ENCODE measurements at regions of chr1 and their contacts with region 1.

Region 1: GRCh38 chr1:91944087-91944486 is 5.1 kb upstream of the BRDT start:
- DNase-seq: no peak
- ATAC-seq: no peak
- H3K4me3 ChIP-seq: no peak overlapping the region
- H3K27ac ChIP-seq: no peak overlapping the region
- H3K4me1 ChIP-seq: no peaks in the 10 kb centered on the region
- H3K27me3 ChIP-seq: no peaks in the 10 kb centered on the region
- CTCF ChIP-seq: no peak

Region 2: GRCh38 chr1:91795591-91796389 is 148.3 kb before region 1 on chr1:
- CTCF ChIA-PET with region 1: no interaction called
- POLR2A ChIA-PET with region 1: interaction called, 15 read pairs
- in situ Hi-C with region 1: no loop called
- intact Hi-C with region 1: no loop called
- DNase-seq: no peak
- ATAC-seq: no peak
- H3K4me3 ChIP-seq: no peak overlapping the region
- H3K27ac ChIP-seq: no peak overlapping the region; the same call in 1 of the 2 replicates
- H3K4me1 ChIP-seq: peaks cover 13% of the 10 kb centered on the region
- H3K27me3 ChIP-seq: no peaks in the 10 kb centered on the region
- CTCF ChIP-seq: no peak

Region 3: DNA sequence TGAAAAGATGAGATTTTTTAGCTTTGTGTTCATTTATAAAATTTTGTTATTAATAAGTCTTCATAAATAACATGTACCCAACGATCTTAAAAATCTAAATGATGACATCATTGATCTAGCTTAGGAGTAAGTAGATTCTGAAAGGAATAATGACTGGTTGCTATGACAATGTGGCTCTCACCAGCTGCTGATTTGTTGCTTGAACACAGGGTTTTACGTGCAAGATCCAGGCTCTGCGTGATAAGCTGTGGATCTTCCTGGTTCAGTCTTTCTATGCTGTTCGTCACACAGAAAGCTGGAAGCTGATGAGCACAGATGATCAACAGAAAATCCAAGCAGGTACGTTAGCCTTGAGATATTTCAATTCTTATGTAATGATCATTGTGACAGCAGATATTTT is 224.6 kb after region 1 on chr1:
- CTCF ChIA-PET with region 1: no interaction called
- POLR2A ChIA-PET with region 1: no interaction called
- in situ Hi-C with region 1: no loop called
- intact Hi-C with region 1: no loop called
- DNase-seq: no peak
- ATAC-seq: no peak
- H3K4me3 ChIP-seq: no peak overlapping the region
- H3K27ac ChIP-seq: no peak overlapping the region
- H3K4me1 ChIP-seq: no peaks in the 10 kb centered on the region
- H3K27me3 ChIP-seq: no peaks in the 10 kb centered on the region; the same call in none of the 2 replicates
- CTCF ChIP-seq: no peak

Measured in Panc1 (cell line).